Activated T-helper 2 cell treated with anti-CD3 and anti-CD28 coated beads, Interferon-gamma antibody, Interleukin-2, Interleukin-4, amounts not matched to agents 10 μg/mL and 5 μg/mL and 100 μg/mL, durations not matched to agents 14 hours and 24 hours and 36 hours (primary cell): ENCODE measurements at regions of chr22 and their contacts with region 1.

Region 1: DNA sequence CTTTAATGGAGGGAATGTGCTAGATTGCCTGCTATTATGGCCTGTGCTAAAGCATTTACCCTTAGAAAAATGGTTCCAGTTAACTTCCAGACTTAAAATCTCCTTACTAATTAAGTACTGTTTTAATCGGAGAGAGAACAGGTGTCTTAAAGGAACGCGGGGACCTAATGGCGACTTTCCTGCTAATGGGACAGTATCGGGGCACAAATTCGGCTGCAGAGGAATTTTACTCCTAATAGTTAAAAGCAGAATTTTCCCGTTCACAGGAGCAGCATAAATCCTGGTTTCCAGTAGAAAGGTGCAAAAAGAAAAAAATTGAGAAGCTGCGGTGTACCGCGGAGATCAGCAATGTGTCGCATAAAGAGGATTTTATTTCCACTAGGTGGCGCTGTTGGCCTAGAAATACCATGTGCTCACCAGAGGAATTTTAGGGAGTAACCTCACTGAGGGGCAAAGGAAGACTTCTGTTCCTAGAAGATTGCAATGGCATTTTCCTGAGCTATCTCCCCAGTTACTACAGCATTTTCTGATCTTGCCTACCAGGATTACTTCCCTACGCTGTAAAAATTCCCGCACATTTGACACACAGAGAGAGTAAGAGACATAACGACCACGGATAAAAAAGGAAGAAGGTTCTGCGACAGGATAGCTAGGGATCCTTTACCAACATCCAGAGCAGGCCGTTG is 44.5 kb downstream of the ZNF280B start:
- DNase-seq: peak; percentile 26
- H3K4me3 Mint-ChIP-seq: no peak overlapping the region
- H3K27ac Mint-ChIP-seq: no peak overlapping the region
- H3K4me1 Mint-ChIP-seq: no peaks in the 10 kb centered on the region
- H3K27me3 Mint-ChIP-seq: peaks cover 20% of the 10 kb centered on the region

Region 2: GRCh38 chr22:22161924-22162851 is 301.8 kb before region 1 on chr22:
- intact Hi-C with region 1: no loop called
- DNase-seq: no peak
- H3K4me3 Mint-ChIP-seq: no peak overlapping the region
- H3K27ac Mint-ChIP-seq: no peak overlapping the region
- H3K4me1 Mint-ChIP-seq: no peaks in the 10 kb centered on the region
- H3K27me3 Mint-ChIP-seq: peaks cover 12% of the 10 kb centered on the region

Region 3: GRCh38 chr22:22587577-22588188 is 123.7 kb after region 1 on chr22:
- intact Hi-C with region 1: loop called (anchors 5 kb)
- DNase-seq: no peak
- H3K4me3 Mint-ChIP-seq: no peak overlapping the region
- H3K27ac Mint-ChIP-seq: no peak overlapping the region
- H3K4me1 Mint-ChIP-seq: no peaks in the 10 kb centered on the region
- H3K27me3 Mint-ChIP-seq: peaks cover 9% of the 10 kb centered on the region